PC-3 (cell line): ENCODE measurements at regions of chr17 and their contacts with region 1.

Region 1: GRCh38 chr17:39209317-39210092 is 9.4 kb downstream of the RPL19 start:
- DNase-seq: no peak
- ATAC-seq: no peak
- H3K4me3 ChIP-seq: no peak overlapping the region
- H3K27ac ChIP-seq: no peak overlapping the region
- H3K4me1 ChIP-seq: no peaks in the 10 kb centered on the region
- H3K27me3 ChIP-seq: no peaks in the 10 kb centered on the region
- CTCF ChIP-seq: no peak

Region 2: GRCh38 chr17:38879878-38880682 is 329.4 kb before region 1 on chr17:
- CTCF ChIA-PET with region 1: no interaction called
- POLR2A ChIA-PET with region 1: interaction called, 15 read pairs
- intact Hi-C with region 1: no loop called
- DNase-seq: peak; percentile 90
- ATAC-seq: peak; percentile 79
- H3K4me3 ChIP-seq: peak overlapping the region; percentile 50
- H3K27ac ChIP-seq: peak overlapping the region; percentile 48
- H3K4me1 ChIP-seq: peaks cover 30% of the 10 kb centered on the region
- H3K27me3 ChIP-seq: no peaks in the 10 kb centered on the region
- CTCF ChIP-seq: no peak

Region 3: DNA sequence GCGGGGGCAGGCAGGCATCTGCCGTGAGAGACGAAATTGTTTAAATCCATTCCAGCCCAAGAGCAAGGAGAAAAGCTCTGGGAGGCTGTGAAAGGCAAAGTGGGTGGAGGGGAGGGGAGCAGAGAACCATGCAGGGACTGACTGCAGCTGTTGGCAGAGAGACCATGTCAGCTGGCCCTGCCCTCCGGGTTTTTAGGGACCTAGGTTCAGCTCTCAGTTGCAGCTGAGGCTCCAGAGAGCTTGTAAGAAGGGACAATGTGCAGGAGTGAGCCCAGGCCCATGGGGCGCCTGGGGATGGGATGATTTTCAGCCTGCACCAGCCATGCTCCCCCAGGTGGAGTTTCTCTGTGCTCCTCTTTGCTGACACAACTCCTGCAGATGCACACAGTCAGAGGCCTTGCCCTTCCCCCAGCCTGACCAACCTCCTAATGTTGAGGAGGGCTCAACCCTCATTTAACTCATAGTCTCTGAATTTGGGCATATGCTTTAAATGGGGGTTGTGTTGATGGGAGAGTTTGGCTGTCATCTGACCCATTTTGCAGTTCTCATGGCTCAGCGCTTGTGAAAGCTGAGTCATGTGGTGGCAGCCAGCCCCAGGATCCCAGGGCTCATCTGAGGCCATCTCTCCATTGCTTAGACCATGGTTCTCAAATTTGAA is 129.0 kb before region 1 on chr17:
- CTCF ChIA-PET with region 1: no interaction called
- POLR2A ChIA-PET with region 1: no interaction called
- intact Hi-C with region 1: no loop called
- DNase-seq: peak; percentile 9
- ATAC-seq: no peak
- H3K4me3 ChIP-seq: no peak overlapping the region
- H3K27ac ChIP-seq: no peak overlapping the region
- H3K4me1 ChIP-seq: no peaks in the 10 kb centered on the region
- H3K27me3 ChIP-seq: no peaks in the 10 kb centered on the region
- CTCF ChIP-seq: no peak

Region 4: GRCh38 chr17:39139137-39139516 is 70.4 kb before region 1 on chr17:
- CTCF ChIA-PET with region 1: no interaction called
- POLR2A ChIA-PET with region 1: no interaction called
- intact Hi-C with region 1: no loop called
- DNase-seq: peak; percentile 48
- ATAC-seq: peak; percentile 67
- H3K4me3 ChIP-seq: no peak overlapping the region
- H3K27ac ChIP-seq: no peak overlapping the region
- H3K4me1 ChIP-seq: peaks cover 9% of the 10 kb centered on the region; the same call in 1 of the 2 replicates
- H3K27me3 ChIP-seq: no peaks in the 10 kb centered on the region
- CTCF ChIP-seq: no peak

Region 5: GRCh38 chr17:39244600-39245570 is 35.4 kb after region 1 on chr17:
- CTCF ChIA-PET with region 1: interaction called, 14 read pairs
- POLR2A ChIA-PET with region 1: no interaction called
- intact Hi-C with region 1: loop called (anchors 1 kb)
- DNase-seq: peak; percentile 90
- ATAC-seq: peak; percentile 79
- H3K4me3 ChIP-seq: no peak overlapping the region
- H3K27ac ChIP-seq: no peak overlapping the region
- H3K4me1 ChIP-seq: peaks cover 6% of the 10 kb centered on the region; the same call in 1 of the 2 replicates
- H3K27me3 ChIP-seq: no peaks in the 10 kb centered on the region
- CTCF ChIP-seq: peak; percentile 89